Activated naive CD8-positive, alpha-beta T cell treated with anti-CD3 and anti-CD28 coated beads, Interleukin-2, amount 10 ng/mL, durations not matched to agents 7 days and 5 days (primary cell): ENCODE measurements at regions of chr6 and their contacts with region 1.

Region 1: DNA sequence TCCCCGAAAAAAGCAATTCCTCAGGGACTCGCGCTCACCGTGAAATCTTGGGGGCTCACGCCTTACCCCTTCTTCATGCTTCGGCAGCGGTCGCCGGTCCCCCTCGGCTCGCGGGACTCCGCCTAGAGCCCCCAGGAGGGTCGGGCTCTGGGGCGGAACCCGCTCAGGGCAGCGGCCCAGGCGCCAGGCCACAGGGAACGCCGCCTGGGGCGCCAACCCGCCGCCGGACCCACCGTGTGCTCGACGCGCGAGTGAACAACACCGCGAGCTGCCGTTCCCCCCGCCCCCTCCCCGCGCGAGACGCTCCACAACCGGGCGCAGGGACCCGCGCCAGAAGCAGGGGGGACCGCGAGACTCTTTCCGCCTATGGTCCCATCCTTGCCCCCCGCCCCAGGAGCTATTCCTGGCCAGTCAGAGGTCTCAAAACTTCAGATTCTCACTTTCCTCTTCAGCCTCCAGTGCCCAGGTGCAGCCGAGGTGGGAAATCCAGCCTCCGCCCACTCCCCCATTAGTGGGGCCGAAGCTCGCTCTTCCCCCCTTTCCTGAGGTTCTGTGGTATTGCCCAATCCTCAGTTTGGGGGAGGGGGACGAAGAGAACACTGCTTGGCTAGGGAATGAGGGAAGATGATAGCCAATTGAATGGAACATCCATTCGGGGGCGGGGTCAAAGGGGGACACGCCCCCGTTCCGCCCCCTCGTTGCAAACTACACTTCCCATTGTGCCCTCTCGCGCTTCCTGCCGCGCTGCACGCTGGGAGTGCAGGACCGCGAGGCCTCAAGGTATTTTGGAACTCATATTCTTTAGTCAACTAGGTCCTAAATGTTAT is at the start of gene WASF1:
- DNase-seq: peak; percentile 93
- ATAC-seq: peak; percentile 88
- H3K4me3 Mint-ChIP-seq: peak within 1 kb of the TSS; percentile 79
- H3K27ac Mint-ChIP-seq: peak within 1 kb of the TSS; percentile 46
- H3K4me1 Mint-ChIP-seq: peaks cover 6% of the 10 kb centered on the region
- H3K27me3 Mint-ChIP-seq: peaks cover 7% of the 10 kb centered on the region
- total RNA-seq, gene WASF1: 0.72 to 1.1 TPM

Region 2: GRCh38 chr6:110039364-110039980 is 140.1 kb before region 1 on chr6:
- POLR2A ChIA-PET with region 1: no interaction called
- DNase-seq: peak; percentile 86
- ATAC-seq: peak; percentile 85
- H3K4me3 Mint-ChIP-seq: peak overlapping the region; percentile 92
- H3K27ac Mint-ChIP-seq: peak overlapping the region; percentile 94
- H3K4me1 Mint-ChIP-seq: peaks cover 25% of the 10 kb centered on the region
- H3K27me3 Mint-ChIP-seq: no peaks in the 10 kb centered on the region

Region 3: DNA sequence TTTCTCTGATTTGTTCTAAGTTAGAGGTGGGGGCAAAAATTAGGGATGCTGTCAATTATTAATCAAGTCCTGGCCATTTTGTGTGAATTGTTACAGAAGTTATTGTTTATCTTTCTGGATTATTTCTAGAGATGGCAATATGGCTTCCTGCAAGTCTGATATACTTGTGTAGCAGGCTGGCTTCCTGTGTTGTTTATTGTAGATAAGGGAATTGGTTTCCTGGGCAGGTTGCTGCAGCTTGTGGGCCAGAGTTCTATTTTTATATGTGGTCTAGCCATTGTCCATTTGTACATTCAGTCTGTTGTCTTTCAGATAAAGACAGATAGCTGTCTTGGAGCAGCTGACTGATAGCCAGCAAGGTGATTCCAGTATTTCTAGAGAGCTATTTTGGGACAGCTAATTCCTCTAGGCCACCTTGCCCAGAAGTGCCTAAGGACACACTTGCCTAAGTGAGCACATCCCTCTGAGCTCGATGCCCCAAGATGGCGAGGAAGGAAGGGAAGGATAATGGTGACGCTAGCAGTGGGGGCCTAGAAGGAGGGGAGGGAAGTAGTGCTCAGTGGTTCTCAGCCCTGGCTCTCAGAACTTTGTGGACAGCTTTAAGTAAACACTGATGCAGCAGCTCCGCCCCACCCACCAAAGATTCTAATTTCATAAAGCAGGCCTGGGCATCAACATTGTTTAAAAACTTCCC is 210.2 kb after region 1 on chr6:
- POLR2A ChIA-PET with region 1: interaction called, 15 read pairs
- DNase-seq: no peak
- ATAC-seq: peak; percentile 26
- H3K4me3 Mint-ChIP-seq: peak overlapping the region; percentile 59
- H3K27ac Mint-ChIP-seq: peak overlapping the region; percentile 84
- H3K4me1 Mint-ChIP-seq: peaks cover 15% of the 10 kb centered on the region
- H3K27me3 Mint-ChIP-seq: no peaks in the 10 kb centered on the region